Cardiac septum (tissue), 1 donor: ENCODE measurements at regions of chr19 and their contacts with region 1.

Region 1: DNA sequence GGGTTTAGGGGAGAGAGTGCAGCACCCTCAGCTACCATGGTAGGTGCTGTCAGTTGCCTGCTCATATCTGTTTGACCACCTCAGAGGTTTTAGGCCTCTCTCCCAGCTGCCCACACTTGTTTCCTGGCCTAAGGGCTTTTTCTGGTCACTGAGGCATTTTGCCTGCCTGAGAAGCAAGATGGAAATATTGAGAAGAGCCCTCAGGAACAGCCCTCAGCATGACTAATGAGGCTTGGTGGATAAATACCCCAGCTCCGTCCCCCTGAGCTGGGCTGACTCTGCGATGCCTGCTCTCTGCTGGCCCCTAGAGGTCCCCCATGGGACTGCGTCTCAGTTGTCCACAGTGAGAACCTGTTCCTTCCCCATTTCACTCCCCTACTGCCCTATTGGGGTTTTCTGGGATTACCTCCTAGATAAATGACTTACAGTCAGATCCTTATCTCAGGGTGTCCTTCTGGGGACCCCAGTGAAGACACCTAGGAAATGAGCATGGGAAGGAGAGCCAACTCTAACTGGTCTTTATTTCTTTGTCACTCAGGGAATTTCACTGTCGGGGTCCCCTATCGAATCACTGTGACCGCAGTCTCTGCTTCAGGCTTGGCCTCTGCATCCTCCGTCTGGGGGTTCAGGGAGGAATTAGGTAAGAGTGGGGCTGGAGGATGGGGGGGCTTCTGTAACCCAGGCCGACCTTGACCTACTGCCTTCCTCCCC is 13.3 kb downstream of the PALM3 start:
- DNase-seq: peak; percentile 81

Region 2: GRCh38 chr19:13880059-13881043 is 168.2 kb before region 1 on chr19:
- intact Hi-C with region 1: loop called (anchors 10 kb)
- DNase-seq: peak; percentile 99